ENCODE measurements at regions of chr7 and their contacts with region 1.

Region 1: DNA sequence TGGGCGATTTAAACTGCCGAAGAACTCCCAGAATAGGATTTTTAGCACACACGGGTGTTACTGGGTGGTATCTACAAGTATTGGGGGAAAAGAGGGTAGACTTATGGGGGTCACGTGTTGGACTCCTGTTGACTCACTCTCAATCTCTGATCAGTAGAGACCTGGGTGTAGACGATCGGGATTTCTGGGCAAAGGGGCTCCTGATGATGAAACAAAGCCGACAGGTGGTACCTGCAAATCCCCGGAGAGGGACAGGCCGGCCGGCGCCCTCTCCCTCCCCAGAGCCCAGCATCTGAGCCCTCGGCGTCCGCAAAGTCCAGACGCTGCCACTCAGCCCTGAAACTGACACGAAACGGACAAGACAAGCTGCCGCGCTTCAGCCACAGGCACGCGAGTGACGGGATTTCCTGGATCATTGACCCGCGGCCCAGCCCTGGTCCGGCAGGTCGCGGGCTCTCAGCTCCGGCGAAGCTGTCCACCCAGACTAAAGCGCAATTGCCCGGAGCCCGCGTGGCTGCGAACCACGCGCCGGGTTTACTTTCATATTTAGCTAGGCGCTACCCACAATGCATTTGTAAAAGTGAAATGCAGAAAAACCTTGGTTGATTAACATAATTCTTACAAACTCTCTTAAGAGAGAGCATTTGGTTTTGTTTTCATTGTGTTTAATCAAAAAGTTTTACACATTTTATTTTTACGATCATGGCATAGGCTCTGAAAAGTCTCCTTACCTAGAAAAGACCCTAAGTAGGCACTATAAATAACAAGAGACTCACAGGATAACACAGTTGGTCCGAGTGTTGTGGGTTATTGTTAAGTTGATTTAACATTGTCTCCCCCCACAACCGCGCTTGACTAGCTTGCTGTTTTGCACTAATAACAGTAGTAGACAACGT is 56.9 kb upstream of the EZH2 start:
- DNase-seq: peak; percentile 91
- ATAC-seq: peak; percentile 97

Region 2: GRCh38 chr7:148884299-148885022 is 56.5 kb before region 1 on chr7:
- intact Hi-C with region 1: loop called (anchors 5 kb)
- DNase-seq: peak; percentile 96
- ATAC-seq: peak; percentile 98

Region 3: GRCh38 chr7:148987010-148987750 is 46.2 kb after region 1 on chr7:
- intact Hi-C with region 1: loop called (anchors 2 kb)
- DNase-seq: peak; percentile 88
- ATAC-seq: peak; percentile 93

Region 4: GRCh38 chr7:149122199-149122575 is 181.2 kb after region 1 on chr7:
- intact Hi-C with region 1: no loop called
- DNase-seq: no peak
- ATAC-seq: no peak